Caco-2 (cell line): ENCODE measurements at regions of chr18 and their contacts with region 1.

Region 1: DNA sequence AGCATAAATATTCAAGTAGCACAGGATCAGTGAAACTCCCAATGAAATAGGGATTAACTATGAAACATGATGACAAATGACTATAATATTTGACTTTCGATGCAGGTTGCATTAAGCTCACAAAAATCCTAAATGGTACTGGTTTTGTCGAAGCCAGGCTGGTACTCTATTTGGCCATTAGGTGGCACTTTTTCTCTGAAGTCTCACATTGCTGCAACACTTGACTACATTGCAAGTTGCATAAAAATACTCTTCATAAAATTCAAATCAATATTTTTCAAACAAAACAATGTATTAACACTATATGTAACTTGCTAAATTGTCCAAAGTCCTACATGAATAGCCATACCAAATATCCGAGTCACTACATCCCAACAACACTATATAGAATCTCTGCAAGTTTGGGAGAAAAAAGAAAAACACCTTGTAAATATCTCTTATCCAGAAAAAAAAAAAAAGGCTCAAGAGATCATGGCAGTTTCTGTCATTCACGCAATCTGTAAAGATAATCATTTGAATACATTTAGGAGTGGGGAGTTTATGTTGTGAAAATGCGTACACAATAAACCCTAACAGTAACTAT is 9.5 kb downstream of the RTTN start:
- DNase-seq: peak in 1 of 2 experiments; percentile 23
- H3K4me3 ChIP-seq: no peak overlapping the region
- H3K4me3 Mint-ChIP-seq: no peak overlapping the region
- H3K27ac Mint-ChIP-seq: no peak overlapping the region
- H3K4me1 ChIP-seq: peaks cover 17% of the 10 kb centered on the region; the same call in 1 of the 2 replicates
- H3K4me1 Mint-ChIP-seq: peaks cover 12% of the 10 kb centered on the region
- H3K27me3 ChIP-seq: no peaks in the 10 kb centered on the region
- H3K27me3 Mint-ChIP-seq: no peaks in the 10 kb centered on the region
- CTCF ChIP-seq: peak; percentile 31 to 40

Region 2: DNA sequence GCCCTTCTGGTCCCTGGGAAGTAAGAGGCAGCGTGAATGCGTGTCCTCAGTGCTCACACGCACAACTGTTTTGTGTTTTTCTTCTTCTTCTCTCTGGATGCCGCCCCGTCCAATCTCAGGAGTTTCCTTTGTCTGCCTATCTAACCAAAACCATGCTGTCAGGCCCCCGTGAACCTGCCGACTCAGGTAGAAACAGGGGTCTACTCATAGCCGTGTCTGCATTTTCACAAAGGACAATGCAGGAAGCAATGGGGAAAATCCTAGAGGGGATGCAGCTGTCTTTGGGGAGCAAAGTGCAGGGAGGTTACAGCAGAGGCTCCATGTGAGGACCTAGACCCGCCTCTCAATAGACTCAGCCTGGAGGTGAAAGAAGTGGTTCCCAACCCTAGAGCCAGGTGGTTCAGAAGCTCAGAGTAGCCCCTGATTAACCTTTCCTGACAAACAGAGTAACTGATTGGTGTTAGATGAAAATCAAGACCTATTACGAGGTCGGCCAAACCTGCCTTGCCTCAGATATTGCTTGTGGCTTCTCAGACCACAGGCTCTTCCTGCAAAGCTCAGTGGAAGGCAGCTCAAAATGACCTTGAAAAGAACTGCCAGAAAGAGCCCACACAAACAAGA is 297.6 kb before region 1 on chr18:
- CTCF ChIA-PET with region 1: no interaction called
- POLR2A ChIA-PET with region 1: no interaction called
- intact Hi-C with region 1: no loop called
- DNase-seq: no peak
- H3K4me3 ChIP-seq: no peak overlapping the region
- H3K4me3 Mint-ChIP-seq: no peak overlapping the region
- H3K27ac Mint-ChIP-seq: no peak overlapping the region
- H3K4me1 ChIP-seq: no peaks in the 10 kb centered on the region
- H3K4me1 Mint-ChIP-seq: no peaks in the 10 kb centered on the region
- H3K27me3 ChIP-seq: no peaks in the 10 kb centered on the region
- H3K27me3 Mint-ChIP-seq: peaks cover 11% of the 10 kb centered on the region
- CTCF ChIP-seq: no peak

Region 3: GRCh38 chr18:70028734-70029133 is 167.2 kb before region 1 on chr18:
- CTCF ChIA-PET with region 1: no interaction called
- POLR2A ChIA-PET with region 1: no interaction called
- intact Hi-C with region 1: no loop called
- DNase-seq: no peak
- H3K4me3 ChIP-seq: no peak overlapping the region
- H3K4me3 Mint-ChIP-seq: no peak overlapping the region
- H3K27ac Mint-ChIP-seq: no peak overlapping the region
- H3K4me1 ChIP-seq: no peaks in the 10 kb centered on the region
- H3K4me1 Mint-ChIP-seq: no peaks in the 10 kb centered on the region
- H3K27me3 ChIP-seq: no peaks in the 10 kb centered on the region
- H3K27me3 Mint-ChIP-seq: no peaks in the 10 kb centered on the region
- CTCF ChIP-seq: no peak

Region 4: DNA sequence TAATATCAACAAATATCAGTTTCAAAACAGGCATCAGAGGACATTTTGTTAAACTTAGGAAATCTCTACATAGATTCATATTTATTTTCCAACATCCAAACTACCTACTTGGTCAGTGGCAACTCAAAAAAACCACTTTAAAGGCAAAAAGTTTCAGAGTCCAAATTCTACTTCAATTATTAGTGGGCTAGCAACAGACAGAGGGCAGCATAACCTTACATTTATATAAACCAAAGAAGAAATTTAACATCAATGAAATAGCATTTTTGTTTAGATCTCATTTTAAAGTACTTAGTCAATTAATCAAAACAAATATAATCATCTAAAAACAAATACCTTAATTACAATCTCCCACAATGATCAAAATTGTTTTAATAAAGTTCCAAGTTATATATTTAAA is 23.7 kb before region 1 on chr18:
- CTCF ChIA-PET with region 1: no interaction called
- POLR2A ChIA-PET with region 1: no interaction called
- intact Hi-C with region 1: loop called (anchors 1 kb)
- DNase-seq: no peak
- H3K4me3 ChIP-seq: no peak overlapping the region
- H3K4me3 Mint-ChIP-seq: no peak overlapping the region
- H3K27ac Mint-ChIP-seq: no peak overlapping the region
- H3K4me1 ChIP-seq: no peaks in the 10 kb centered on the region
- H3K4me1 Mint-ChIP-seq: no peaks in the 10 kb centered on the region
- H3K27me3 ChIP-seq: no peaks in the 10 kb centered on the region
- H3K27me3 Mint-ChIP-seq: no peaks in the 10 kb centered on the region
- CTCF ChIP-seq: peak in 1 of 2 experiments; percentile 10

Region 5: GRCh38 chr18:70181015-70181414 is 14.9 kb before region 1 on chr18:
- CTCF ChIA-PET with region 1: no interaction called
- POLR2A ChIA-PET with region 1: no interaction called
- intact Hi-C with region 1: loop called (anchors 1 kb)
- DNase-seq: peak in 1 of 2 experiments; percentile 47
- H3K4me3 ChIP-seq: no peak overlapping the region
- H3K4me3 Mint-ChIP-seq: peak overlapping the region; percentile 56
- H3K27ac Mint-ChIP-seq: peak overlapping the region; percentile 64
- H3K4me1 ChIP-seq: peaks cover 25% of the 10 kb centered on the region; the same call in 1 of the 2 replicates
- H3K4me1 Mint-ChIP-seq: peaks cover 17% of the 10 kb centered on the region
- H3K27me3 ChIP-seq: no peaks in the 10 kb centered on the region
- H3K27me3 Mint-ChIP-seq: no peaks in the 10 kb centered on the region
- CTCF ChIP-seq: no peak